ENCODE measurements at regions of chr1 and their contacts with region 1.

Region 1: DNA sequence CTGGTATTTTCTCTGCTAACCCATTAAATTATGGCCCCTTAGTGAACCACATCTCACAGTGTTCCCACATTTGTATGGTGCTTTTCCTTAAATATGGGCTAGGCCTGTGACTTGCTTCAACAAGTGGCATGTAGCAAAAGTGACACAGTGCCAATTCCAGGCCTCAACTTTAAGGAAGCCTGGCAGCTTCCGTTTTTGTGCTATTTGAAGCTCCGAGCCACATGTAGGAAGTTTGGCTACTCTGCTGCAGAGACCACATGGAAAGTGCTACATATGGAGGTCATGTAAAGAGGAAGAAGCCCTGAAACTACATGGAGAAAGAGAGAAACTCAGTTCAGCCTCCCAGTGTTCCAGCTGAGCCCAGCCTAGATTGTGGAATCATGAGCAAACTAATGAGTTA is 28.5 kb upstream of the DR1 start:
- DNase-seq: no peak

Region 2: DNA sequence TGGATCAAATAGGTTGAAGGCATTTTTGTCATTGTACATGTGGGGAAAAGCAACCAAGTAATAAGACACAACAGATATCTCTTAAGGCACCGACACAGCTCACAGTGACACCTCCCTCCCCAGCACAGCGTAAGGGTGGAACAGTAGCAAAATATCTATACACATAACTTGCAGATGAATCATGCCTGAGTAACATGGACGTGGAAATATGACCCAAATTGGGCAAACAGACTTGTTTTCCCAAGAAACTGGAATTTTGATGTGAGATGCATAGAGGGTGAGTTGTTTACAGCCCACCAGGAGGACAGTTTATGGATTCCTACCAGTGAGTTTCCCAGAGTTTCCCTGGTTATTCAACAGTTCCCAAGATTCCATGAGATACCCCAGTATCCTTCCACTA is 21.2 kb after region 1 on chr1:
- intact Hi-C with region 1: loop called in 1 of 2 experiments (anchors 2 kb)
- DNase-seq: no peak

Region 3: DNA sequence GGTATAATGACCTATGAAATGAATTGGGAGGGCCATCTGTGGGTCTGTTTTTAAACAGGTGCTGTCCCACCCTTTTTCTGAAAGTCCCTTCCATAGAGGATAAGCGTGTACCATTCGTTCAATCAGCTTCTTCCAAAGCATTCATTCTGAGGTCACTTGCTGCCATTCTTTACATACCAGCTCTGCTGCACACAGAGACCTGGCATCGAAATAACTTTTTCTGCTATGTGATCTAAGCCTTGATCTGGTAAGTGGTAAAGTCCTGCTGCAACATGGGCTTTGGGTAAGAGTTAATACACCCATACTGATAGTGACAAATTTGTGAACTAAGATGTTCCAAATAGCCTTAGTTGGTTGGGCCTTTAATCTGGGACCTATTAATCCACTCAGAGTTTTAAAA is 67.4 kb after region 1 on chr1:
- intact Hi-C with region 1: no loop called
- DNase-seq: no peak

Region 4: GRCh38 chr1:93680757-93681550 is 363.7 kb after region 1 on chr1:
- intact Hi-C with region 1: no loop called
- DNase-seq: peak; percentile 92

Measured in posterior vena cava (tissue), 2 donors.